Activated CD4-positive, alpha-beta memory T cell treated with anti-CD3 and anti-CD28 coated beads for 36 hours (primary cell): ENCODE measurements at regions of chr1 and their contacts with region 1.

Region 1: DNA sequence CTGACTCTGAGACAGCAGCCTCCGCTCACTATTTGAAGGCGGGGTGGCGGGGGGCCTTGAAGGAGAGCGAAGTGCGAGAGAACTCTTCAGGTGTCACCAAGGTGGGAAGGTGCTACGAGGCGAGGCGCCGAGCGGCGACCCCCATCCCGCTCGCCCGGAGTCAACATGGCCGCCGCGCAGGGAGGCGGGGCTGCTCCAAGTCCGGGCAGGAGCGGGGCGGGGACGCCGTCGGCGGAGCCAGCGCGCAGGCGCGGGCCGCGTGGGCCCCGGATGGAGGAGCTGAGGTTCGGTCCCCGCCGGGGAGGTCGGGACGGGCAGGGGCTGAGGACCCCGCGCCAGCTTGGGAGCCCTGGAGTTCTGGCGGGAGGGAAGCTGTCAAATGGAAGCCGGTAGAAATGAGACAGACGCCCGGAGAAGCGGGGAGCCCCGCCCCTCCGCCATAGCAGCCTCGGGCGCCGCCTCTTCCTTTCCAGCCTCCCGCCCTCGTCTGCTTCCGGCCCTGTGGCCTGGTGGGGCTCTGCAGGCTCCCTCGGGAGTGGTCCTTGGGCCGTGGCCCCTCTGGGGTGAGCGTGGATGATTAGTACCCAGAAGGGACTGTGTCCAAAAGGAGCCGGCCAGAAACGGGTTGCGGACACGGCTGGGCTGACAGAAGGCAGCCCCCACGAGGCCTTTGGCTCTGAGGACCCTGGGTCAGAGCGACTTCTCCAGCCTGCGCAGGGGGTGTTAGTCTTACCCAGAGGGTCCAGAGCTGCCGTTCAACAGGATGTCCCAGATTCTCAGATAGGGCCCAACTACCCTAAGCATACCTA is at the start of gene PIGV:
- DNase-seq: peak; percentile 90
- H3K4me3 Mint-ChIP-seq: peak within 1 kb of the TSS; percentile 90
- H3K27ac Mint-ChIP-seq: peak within 1 kb of the TSS; percentile 99
- H3K4me1 Mint-ChIP-seq: peaks cover 77% of the 10 kb centered on the region
- H3K27me3 Mint-ChIP-seq: no peaks in the 10 kb centered on the region
- total RNA-seq, gene PIGV: 15.1 to 15.3 TPM

Region 2: DNA sequence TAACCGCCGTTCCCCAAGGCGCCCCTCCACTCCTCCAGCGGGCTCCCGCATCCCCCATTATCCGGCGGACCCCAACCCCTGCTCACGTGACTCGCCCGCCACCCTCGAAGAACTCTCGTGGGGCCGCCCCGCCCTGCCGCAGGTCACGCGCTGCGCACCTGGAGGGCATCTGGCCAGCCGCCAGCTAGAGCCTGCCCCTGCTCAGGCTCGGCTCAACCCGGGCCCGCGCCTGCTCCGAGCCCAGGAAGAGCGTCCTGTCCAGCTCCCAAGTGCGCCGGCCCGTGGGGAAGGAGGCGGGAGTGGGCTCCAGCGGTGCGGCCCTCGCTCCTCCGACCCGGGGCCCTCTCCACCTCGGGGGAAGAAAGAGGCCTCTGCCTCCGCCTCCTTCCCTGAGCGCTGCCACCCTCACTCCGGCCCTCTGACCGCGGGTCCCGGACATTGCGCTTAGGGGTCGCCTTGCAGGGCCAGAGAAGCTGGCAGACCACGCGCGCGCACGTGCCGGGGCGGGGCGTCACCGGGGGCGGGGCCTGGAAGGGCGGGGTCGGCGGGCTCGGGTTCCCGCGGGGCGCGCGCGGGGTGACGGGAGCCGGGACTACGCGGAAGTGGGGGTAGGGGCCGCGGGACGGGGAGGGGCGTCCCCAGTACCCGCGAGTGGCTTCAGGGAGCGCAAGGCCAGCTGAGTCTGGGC is 287.3 kb before region 1 on chr1:
- CTCF ChIA-PET with region 1: interaction called, 35 read pairs
- POLR2A ChIA-PET with region 1: interaction called, 4 read pairs
- intact Hi-C with region 1: loop called (anchors 1 kb)
- DNase-seq: peak; percentile 93
- H3K4me3 Mint-ChIP-seq: peak overlapping the region; percentile 88
- H3K27ac Mint-ChIP-seq: peak overlapping the region; percentile 93
- H3K4me1 Mint-ChIP-seq: peaks cover 8% of the 10 kb centered on the region
- H3K27me3 Mint-ChIP-seq: no peaks in the 10 kb centered on the region

Region 3: DNA sequence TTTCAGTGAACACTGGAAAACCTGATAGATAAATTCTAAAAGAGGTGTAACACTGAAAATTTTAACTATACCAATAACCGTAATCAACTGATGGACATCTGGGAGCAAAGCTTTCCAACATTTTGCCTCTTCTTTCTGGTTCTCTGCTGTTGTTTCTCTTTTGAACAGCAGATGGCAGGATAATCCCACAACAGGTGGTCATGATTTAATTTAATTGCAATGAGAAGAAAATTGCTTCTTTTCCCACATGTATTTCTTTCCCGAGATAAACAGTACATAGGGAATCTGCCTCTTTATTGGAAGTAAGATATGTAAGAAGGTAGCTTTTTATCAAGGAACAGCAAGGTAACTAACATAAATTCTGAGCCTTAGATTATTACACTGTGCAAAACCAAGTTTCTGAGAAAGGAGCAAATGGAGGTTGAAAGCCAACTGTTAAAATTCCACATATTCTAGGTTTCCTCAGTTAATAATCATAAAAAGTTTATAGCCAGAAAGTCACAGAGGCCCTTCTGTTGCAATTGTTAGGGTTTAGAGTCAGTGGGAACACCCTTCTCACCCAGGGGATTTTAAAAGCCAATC is 185.4 kb before region 1 on chr1:
- CTCF ChIA-PET with region 1: interaction called, 245 read pairs
- POLR2A ChIA-PET with region 1: interaction called, 26 read pairs
- intact Hi-C with region 1: loop called (anchors 1 kb)
- DNase-seq: no peak
- H3K4me3 Mint-ChIP-seq: no peak overlapping the region
- H3K27ac Mint-ChIP-seq: no peak overlapping the region
- H3K4me1 Mint-ChIP-seq: peaks cover 7% of the 10 kb centered on the region
- H3K27me3 Mint-ChIP-seq: no peaks in the 10 kb centered on the region

Region 4: GRCh38 chr1:26700711-26701110 is 87.2 kb before region 1 on chr1:
- CTCF ChIA-PET with region 1: interaction called, 113 read pairs
- POLR2A ChIA-PET with region 1: interaction called, 177 read pairs
- intact Hi-C with region 1: loop called (anchors 1 kb)
- DNase-seq: peak; percentile 31
- H3K4me3 Mint-ChIP-seq: no peak overlapping the region
- H3K27ac Mint-ChIP-seq: no peak overlapping the region
- H3K4me1 Mint-ChIP-seq: peaks cover 8% of the 10 kb centered on the region
- H3K27me3 Mint-ChIP-seq: no peaks in the 10 kb centered on the region

Region 5: DNA sequence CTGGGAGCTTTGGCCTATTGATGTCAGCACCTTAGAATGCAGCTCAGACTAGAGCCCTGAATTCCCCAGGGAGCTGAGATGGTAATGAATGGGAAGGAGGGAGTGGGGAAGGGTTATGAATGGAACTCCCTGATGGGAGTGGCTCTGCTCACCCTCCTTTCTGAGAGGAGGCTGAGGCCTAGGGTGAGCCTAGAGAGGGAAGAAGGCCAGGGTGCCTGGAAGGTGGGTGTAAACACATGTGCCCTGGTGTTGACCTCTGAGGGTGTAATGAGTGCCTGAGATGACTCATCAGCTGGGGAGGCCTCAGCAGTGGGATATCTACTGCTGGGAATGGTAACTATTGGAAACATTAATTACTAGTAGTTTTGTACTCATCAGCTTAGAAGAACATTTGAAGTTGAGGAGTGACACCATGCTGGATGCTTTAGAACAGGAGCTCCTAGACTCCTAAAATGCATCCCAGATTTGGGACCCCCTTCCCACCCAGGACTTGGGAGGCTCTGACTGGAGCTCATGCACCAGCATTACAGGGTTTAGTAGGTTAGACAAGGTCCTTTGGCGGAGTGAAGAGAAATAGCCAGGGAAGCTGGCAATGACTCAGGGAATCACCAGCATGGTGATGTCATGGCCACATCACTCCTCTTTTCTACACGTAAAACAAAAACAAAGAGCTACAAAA is 16.1 kb before region 1 on chr1:
- CTCF ChIA-PET with region 1: interaction called, 5 read pairs
- POLR2A ChIA-PET with region 1: interaction called, 4 read pairs
- intact Hi-C with region 1: loop called (anchors 2 kb)
- DNase-seq: peak; percentile 63
- H3K4me3 Mint-ChIP-seq: no peak overlapping the region
- H3K27ac Mint-ChIP-seq: peak overlapping the region; percentile 80
- H3K4me1 Mint-ChIP-seq: peaks cover 28% of the 10 kb centered on the region
- H3K27me3 Mint-ChIP-seq: no peaks in the 10 kb centered on the region

Region 6: DNA sequence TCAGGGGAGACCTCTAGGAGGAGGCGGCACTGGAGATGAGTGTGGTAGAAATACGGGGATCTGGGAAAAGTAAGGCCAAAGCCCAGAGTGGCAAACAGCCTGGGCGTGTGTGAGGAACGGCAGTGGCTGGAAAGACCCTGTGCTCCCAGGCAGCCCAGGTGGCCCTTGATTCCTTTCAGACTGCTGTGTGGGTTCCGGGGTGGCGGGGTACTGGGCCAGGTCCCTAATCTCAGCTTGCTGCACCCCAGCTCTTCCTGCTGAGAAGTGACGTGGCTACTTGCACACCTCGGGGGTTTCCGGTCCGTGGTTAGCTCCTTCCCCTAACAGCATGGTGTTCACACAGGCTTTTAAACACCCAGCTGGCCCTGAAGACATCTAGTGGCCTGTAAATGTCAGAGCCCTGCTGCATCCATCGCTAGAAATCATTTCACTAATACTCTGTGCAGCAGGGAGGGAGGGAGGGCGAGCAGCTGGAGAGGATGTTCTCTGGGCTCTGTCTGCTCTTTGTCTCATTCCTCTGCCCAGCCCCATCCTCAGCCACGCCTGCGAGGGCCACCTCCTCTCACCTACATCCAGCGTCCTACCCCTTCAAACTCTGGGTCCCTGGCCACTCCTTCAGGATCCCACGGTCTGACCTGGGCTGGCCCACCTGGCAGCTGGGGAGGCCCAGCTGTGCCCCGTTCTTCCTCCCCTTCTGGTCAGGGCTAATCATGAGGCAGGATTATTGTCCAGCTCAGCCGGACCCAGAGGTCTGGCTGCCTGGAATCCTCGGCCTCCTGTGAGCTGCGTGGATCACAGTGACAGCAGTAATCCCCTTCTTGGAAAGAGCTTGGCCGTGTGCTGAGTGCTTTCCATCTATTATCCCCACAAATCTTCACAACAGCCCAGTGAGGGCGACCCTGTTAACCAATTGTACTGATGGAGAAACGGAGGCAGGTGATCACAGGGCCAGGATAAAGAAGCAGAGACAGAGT is 45.8 kb after region 1 on chr1:
- CTCF ChIA-PET with region 1: interaction called, 36 read pairs
- POLR2A ChIA-PET with region 1: interaction called, 9 read pairs
- intact Hi-C with region 1: loop called (anchors 1 kb)
- DNase-seq: peak; percentile 93
- H3K4me3 Mint-ChIP-seq: peak overlapping the region; percentile 72
- H3K27ac Mint-ChIP-seq: peak overlapping the region; percentile 100
- H3K4me1 Mint-ChIP-seq: peaks cover 78% of the 10 kb centered on the region
- H3K27me3 Mint-ChIP-seq: no peaks in the 10 kb centered on the region